Caco-2 (cell line): ENCODE measurements at regions of chr1 and their contacts with region 1.

Region 1: GRCh38 chr1:94801919-94802546 is 18.1 kb upstream of the SLC44A3 start:
- DNase-seq: peak in 1 of 2 experiments; percentile 38
- H3K4me3 ChIP-seq: no peak overlapping the region
- H3K4me3 Mint-ChIP-seq: no peak overlapping the region
- H3K27ac Mint-ChIP-seq: peak overlapping the region; percentile 50
- H3K4me1 ChIP-seq: peaks cover 27% of the 10 kb centered on the region
- H3K4me1 Mint-ChIP-seq: peaks cover 36% of the 10 kb centered on the region
- H3K27me3 ChIP-seq: no peaks in the 10 kb centered on the region
- H3K27me3 Mint-ChIP-seq: no peaks in the 10 kb centered on the region
- CTCF ChIP-seq: peak in 1 of 2 experiments; percentile 16

Region 2: DNA sequence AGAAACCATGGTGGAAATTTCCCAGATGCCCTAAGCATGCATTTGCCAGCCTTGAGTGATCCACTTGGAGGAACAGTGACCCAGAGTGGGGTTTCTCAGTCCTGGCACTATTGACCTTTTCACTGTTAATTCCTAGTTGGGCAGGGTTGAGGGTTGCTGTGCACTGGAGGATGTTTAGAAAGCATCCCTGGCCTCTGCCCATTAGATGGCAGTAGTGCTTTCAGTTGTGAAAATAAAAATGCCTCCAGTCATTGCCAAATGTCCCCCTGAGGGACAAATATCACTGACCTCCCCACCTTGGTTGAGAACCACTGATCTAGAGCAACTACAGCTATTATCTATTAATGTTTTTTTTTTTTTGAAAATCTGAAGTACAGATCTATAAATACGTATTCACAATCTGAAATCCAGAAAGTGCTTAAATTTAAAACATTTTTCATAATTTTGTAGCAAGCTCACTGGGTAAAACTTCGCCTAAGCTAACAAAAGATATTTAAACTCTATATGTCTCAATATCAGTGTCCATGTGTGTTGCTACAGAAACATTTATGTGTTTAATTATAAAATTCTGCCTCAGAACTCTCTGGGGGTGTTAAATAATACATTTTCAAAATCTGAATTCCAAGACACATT is 287.8 kb before region 1 on chr1:
- CTCF ChIA-PET with region 1: no interaction called
- POLR2A ChIA-PET with region 1: no interaction called
- intact Hi-C with region 1: loop called (anchors 1 kb)
- DNase-seq: peak in 1 of 2 experiments; percentile 40
- H3K4me3 ChIP-seq: no peak overlapping the region
- H3K4me3 Mint-ChIP-seq: no peak overlapping the region
- H3K27ac Mint-ChIP-seq: no peak overlapping the region
- H3K4me1 ChIP-seq: 0 out of 2 replicates have a peak, but pooled peaks cover 3% of the 10 kb centered on the region
- H3K4me1 Mint-ChIP-seq: peaks cover 7% of the 10 kb centered on the region
- H3K27me3 ChIP-seq: no peaks in the 10 kb centered on the region
- H3K27me3 Mint-ChIP-seq: no peaks in the 10 kb centered on the region
- CTCF ChIP-seq: peak; percentile 50 to 56

Region 3: DNA sequence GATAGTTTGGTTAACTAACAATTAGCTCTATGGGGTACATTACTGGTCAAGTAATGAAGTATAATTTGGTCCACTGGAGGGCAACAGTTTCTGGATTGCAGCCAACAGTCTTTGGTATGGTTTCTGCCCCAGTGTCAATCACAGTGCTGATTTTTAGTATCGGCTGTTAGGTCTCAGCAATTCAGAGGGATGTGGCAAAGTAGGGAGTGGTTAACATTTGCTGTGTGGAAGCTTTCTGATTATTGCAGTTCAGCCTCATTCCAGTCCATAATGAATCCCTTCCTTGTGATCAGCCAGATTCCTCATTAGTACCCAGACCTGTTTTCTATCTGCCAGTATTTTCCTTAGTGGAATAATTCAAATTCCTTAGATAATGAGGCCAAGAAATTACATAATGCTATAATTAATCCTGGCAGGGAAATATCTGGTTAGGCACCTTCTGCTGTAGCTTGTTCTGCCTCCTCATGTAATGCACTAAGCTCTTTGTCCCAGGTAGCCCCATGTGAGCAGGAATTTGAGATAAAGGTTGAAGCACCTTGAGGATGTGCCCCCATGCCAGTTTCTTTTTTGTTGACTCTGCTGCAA is 274.5 kb before region 1 on chr1:
- CTCF ChIA-PET with region 1: interaction called, 9 read pairs
- POLR2A ChIA-PET with region 1: no interaction called
- intact Hi-C with region 1: loop called (anchors 1 kb)
- DNase-seq: peak; percentile 47 to 51
- H3K4me3 ChIP-seq: no peak overlapping the region
- H3K4me3 Mint-ChIP-seq: no peak overlapping the region
- H3K27ac Mint-ChIP-seq: peak overlapping the region; percentile 33
- H3K4me1 ChIP-seq: peaks cover 36% of the 10 kb centered on the region
- H3K4me1 Mint-ChIP-seq: peaks cover 45% of the 10 kb centered on the region
- H3K27me3 ChIP-seq: no peaks in the 10 kb centered on the region
- H3K27me3 Mint-ChIP-seq: no peaks in the 10 kb centered on the region
- CTCF ChIP-seq: peak in 1 of 2 experiments; percentile 23

Region 4: DNA sequence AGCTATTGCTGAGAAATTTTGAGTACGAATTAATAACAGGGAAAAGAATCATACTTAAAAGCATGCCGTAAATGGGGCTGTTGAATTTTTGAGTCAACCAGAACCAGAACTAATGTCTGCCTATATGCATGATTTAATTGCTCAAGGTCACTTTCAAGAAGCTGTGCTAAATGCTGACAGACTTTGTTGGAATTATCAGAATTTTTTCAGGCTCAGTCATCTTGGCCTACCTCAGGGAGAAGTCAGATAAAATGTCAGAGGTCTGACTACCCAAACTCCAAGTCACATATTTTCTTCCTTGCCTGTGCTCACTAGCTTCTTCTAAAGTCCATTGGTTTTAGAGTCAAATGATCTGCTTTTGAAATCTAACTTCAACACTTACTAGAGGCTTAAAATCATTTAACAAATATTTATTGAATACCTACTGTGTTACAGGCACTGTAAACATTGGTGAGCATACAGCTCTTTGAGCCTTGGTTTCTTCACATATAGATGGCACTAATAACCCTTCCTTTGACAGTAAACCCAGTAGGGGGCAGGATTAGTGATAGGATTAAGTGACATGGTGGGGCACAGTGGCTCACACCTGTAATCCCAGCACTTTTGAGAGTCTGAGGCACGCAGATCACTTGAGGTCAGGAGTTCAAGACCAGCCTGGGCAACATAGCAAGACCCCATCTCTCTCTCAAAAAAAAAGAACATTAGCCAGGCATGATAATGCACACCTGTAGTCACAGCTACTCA is 103.1 kb before region 1 on chr1:
- CTCF ChIA-PET with region 1: no interaction called
- POLR2A ChIA-PET with region 1: no interaction called
- intact Hi-C with region 1: loop called (anchors 5 kb)
- DNase-seq: no peak
- H3K4me3 ChIP-seq: no peak overlapping the region
- H3K4me3 Mint-ChIP-seq: no peak overlapping the region
- H3K27ac Mint-ChIP-seq: peak overlapping the region; percentile 67
- H3K4me1 ChIP-seq: peaks cover 24% of the 10 kb centered on the region
- H3K4me1 Mint-ChIP-seq: peaks cover 22% of the 10 kb centered on the region
- H3K27me3 ChIP-seq: no peaks in the 10 kb centered on the region
- H3K27me3 Mint-ChIP-seq: no peaks in the 10 kb centered on the region
- CTCF ChIP-seq: no peak